Left ventricle myocardium superior (tissue), 1 donor: ENCODE measurements at regions of chr15 and their contacts with region 1.

Region 1: DNA sequence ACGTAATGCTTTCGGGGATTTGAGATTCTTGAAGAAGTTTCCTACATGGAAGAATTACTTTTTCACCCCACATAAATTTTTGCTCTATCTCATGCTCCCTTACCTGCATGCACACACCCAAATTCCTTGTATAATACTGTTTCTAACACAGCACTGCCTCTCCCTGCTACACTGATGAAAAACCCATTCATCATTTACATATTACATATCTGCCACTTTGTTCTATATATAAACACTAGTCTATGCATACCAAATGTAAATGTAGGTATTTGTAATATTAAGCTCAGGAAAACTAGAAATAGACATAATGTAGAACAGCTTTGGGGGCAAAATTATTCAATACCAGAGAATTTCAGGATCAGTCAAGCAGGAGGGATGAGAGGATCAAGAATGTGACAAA is 182.6 kb upstream of the SEMA6D start:
- DNase-seq: no peak
- ATAC-seq: no peak

Region 2: GRCh38 chr15:47484059-47484458 is 50.6 kb before region 1 on chr15:
- intact Hi-C with region 1: loop called (anchors 10 kb)
- DNase-seq: no peak
- ATAC-seq: no peak